ENCODE measurements at regions of chr1 and their contacts with region 1.

Region 1: DNA sequence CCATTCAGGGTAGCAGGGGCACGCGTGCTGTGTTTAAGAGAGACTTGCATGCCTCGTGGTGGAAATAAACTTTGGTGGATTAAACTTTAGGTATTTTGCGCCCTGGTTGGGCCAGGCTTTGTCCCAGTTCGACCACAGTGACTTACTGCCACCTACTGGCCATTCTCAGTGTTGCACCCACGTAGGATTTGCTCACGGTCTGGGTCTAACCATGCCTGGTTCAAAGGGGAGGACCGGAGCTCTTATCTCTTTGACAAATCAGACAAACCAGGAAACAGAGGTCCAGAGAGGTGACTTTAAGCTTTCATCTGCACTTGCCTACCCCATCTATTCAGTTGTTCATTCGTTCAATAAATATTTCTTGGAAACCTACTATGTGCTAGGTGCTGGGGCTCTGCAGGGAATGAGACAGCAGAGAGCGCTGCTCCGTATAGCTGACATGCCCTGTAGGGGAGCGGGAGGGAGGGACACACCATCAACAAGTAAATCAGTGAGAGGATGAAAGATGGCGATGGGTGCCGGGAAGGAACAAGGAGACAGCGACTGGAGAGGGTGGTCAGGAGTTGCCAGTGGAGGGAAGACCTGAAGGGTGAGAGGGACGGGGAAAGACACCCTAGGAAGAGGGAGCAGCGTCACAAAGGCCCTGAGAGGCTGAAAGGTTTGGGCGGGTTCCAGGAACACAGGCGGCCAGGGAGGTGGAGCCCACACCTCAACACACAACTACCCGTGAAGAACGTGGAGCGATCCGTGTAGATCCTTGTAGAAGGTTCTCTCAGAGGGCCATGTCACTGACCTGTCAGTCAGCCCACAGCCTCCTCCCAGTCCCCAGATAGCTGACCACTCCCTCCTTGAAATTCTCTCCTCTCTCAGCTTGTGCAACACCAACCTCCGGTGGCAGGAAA is 27.2 kb upstream of the TINAGL1 start:
- DNase-seq: peak; percentile 96

Region 2: DNA sequence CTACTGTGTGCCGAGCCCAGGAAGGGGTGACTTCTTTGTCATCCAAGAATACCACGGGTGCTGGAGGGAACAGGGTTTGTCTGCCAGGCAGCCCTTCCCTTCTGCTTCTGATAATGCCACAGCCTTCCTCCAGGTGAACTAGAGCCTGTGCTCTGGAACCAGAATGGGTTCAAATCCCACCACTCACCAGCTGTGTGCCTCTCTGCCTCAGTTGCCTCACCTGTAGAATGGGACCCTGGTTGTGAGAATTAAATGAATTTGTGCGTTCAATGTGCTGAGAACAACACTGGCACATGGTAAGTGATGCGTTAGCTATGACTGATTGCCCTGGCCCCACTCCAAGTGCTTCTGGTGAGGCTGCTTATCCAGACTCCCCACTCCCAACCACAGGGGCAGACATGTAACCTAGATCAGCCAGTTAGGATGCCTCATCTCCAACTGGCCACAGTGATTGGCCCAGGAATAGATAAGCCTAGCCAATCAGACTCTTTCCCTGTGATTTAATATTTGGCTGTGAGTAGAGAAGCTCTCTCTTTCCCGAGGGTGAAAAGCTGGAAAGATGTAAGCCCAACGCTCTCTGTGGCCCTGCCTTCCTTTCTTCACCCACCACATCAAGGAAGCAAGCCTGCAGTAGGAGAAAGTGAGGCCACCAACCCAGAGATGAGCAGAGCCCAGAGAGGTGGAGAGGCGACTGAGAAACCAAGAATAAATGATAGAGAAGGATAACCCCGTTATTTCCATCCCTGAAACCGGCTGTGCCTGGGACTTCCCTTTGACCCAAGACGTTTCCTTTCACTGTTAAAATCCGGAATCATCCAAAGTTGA is 770.8 kb before region 1 on chr1:
- CTCF ChIA-PET with region 1: no interaction called
- POLR2A ChIA-PET with region 1: no interaction called
- DNase-seq: peak; percentile 58

Region 3: GRCh38 chr1:31394628-31395193 is 154.4 kb before region 1 on chr1:
- CTCF ChIA-PET with region 1: interaction called, 23 read pairs
- POLR2A ChIA-PET with region 1: interaction called, 6 read pairs
- DNase-seq: peak; percentile 97

Region 4: GRCh38 chr1:31531177-31531999 is 17.8 kb before region 1 on chr1:
- CTCF ChIA-PET with region 1: interaction called, 16 read pairs
- POLR2A ChIA-PET with region 1: no interaction called
- DNase-seq: no peak

Region 5: GRCh38 chr1:31987135-31987619 is 438.0 kb after region 1 on chr1:
- CTCF ChIA-PET with region 1: no interaction called
- POLR2A ChIA-PET with region 1: no interaction called
- DNase-seq: peak; percentile 36

Measured in HEK293T (cell line).